B cell (primary cell): ENCODE measurements at regions of chr2 and their contacts with region 1.

Region 1: DNA sequence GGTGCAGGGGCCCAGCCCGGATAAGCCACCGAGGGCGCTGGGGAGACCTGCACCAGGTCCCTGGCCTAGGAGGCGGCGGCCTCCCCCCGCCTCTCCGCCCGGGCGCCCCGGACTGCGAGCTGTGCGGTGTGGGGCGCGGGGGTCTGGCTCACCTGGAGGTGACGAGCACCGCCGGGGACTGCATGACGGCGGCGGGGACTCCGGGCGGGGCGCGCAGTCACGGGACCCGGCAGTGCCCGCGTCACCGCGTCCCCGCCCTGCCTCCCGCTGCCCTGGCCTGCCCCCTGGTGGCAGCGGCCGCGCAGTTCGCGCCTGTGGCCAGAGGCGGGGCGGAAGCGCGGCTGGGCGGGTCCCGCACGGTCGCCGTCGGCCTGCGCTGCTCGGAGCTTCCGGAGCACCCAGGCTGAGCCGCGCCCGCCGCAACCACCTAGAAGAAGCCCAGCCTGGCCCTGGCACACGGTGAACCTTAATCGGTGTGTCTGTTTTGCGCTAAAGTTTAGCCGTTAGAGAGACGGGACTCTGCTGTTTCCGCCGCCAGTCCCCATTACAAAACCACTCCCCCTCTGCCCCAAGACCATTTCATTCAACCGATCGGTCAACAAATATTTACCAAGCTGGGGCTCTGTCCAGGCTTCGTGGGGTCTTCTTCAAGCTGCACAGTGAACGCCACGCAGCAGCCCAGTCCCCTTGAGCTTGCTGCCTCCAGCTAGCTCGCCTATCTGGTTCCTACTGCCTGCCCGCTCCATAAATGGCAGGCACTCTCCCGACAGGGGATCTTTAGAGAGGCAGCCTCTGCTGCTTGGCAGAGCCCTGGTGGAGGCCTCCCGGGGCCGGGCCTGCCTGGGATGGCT is at the start of gene HS1BP3:
- DNase-seq: peak; percentile 96
- ATAC-seq: peak; percentile 96
- H3K4me3 ChIP-seq: peak within 1 kb of the TSS; percentile 73 to 90 (median 81)
- H3K4me3 Mint-ChIP-seq: peak within 1 kb of the TSS; percentile 88
- H3K27ac ChIP-seq: peak within 1 kb of the TSS; percentile 93 to 94
- H3K27ac Mint-ChIP-seq: peak within 1 kb of the TSS; percentile 97
- H3K4me1 ChIP-seq: peaks cover 41 to 49% of the 10 kb centered on the region in 2 donors
- H3K4me1 Mint-ChIP-seq: peaks cover 50% of the 10 kb centered on the region
- H3K27me3 ChIP-seq: peaks cover 0 to 4% (median 0%) of the 10 kb centered on the region in 4 experiments
- H3K27me3 Mint-ChIP-seq: peaks cover 3% of the 10 kb centered on the region
- CTCF ChIP-seq: peak; percentile 90
- total RNA-seq, gene HS1BP3: 27.5 and 27.8 TPM in 2 replicates

Region 2: DNA sequence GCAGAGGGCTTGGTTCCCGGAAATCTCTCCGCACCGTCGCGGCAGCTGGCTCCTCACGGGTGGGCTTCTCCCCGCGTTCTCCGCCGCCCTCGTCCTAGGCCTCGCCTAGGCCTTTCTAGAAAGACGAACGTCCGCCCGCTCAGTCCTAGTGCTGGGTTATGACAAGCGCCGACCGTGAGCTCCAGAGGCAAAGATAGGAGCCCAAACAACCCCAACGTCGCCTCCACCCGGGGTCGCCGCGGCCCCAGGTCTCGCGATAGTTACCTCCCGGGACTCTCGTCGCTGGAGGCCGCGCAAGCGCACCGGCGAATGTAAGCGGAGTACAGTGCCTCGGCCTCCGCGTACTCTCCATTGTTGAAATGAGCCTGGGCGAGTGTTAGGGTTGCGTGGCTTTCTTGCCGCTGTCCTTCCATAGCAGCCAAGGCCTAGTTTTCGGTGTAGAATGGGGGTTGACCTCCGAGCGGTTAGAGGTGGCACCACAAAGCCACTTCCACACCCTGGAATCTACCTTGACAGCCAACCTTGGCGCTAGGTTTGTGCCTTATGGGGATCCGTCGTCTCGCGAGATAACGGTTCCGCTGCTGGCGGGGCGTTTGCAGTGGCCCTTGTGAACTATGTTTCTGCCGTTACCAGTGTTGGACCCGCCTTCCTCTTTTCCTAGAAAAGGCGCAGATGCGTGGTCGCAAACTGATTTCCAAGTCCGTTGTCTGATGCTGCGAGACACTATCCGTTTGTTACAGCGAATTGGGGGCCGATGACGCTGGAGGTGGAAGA is 749.5 kb before region 1 on chr2 and contains the start of gene TTC32:
- CTCF ChIA-PET with region 1: no interaction called
- POLR2A ChIA-PET with region 1: no interaction called
- intact Hi-C with region 1: loop called (anchors 2 kb)
- DNase-seq: peak; percentile 98
- ATAC-seq: peak; percentile 89
- H3K4me3 ChIP-seq: peak within 1 kb of the TSS; percentile 79 to 99 (median 93)
- H3K4me3 Mint-ChIP-seq: peak within 1 kb of the TSS; percentile 99
- H3K27ac ChIP-seq: peak within 1 kb of the TSS; percentile 92 to 94
- H3K27ac Mint-ChIP-seq: peak within 1 kb of the TSS; percentile 99
- H3K4me1 ChIP-seq: peaks cover 19 to 33% of the 10 kb centered on the region in 2 donors
- H3K4me1 Mint-ChIP-seq: peaks cover 44% of the 10 kb centered on the region
- H3K27me3 ChIP-seq: no peaks in the 10 kb centered on the region
- H3K27me3 Mint-ChIP-seq: peaks cover 3% of the 10 kb centered on the region
- CTCF ChIP-seq: no peak
- total RNA-seq, gene TTC32: 38.1 TPM in 2 replicates

Region 3: DNA sequence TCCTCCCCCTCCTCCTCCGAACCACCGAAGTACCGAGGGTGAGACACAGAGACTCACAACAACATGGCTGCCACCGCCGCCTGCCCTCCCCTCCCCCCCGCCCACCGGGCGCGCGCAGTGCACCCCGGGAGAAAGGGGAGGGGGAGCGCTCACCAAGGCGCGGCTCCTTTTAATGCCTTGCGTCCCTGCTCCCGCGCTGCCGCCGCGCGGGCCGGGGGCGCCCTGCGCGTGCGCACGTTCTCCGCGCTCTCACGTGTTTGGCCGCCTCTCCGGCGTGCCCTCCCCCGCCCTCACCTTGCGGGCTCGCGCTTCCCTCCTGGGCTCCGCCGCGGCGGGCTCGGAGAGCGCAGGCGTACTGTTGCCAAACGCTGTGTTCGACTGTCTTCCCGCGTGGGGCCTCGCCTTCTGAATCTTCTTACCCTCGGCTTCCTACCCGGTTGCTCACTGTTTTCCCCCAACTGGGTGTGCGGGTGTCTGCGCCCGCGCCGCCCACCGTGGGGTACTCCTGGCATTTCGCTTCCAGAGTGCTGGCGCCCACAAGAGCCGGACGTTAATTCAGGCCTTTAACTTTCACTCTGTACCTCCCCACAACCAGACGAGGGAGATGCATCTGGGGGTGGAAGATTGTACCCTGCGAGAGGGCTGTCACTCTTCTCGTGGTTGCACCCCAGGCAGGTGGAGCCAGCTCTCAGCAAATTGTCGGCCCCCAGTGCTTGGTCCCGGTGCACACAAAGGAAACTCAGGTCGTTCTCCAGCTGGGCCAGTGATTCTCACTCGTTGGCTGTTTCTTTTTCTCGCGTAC is 300.2 kb before region 1 on chr2 and contains the start of gene PUM2:
- CTCF ChIA-PET with region 1: interaction called, 3 read pairs
- POLR2A ChIA-PET with region 1: interaction called, 9 read pairs
- intact Hi-C with region 1: loop called (anchors 1 kb)
- DNase-seq: peak; percentile 99
- ATAC-seq: peak; percentile 85
- H3K4me3 ChIP-seq: peak within 1 kb of the TSS; percentile 76 to 95 (median 86)
- H3K4me3 Mint-ChIP-seq: no peak within 1 kb of the TSS
- H3K27ac ChIP-seq: peak within 1 kb of the TSS; percentile 89 to 94
- H3K27ac Mint-ChIP-seq: no peak within 1 kb of the TSS
- H3K4me1 ChIP-seq: peaks cover 32 to 39% of the 10 kb centered on the region in 2 donors
- H3K4me1 Mint-ChIP-seq: peaks cover 34% of the 10 kb centered on the region
- H3K27me3 ChIP-seq: no peaks in the 10 kb centered on the region
- H3K27me3 Mint-ChIP-seq: no peaks in the 10 kb centered on the region
- CTCF ChIP-seq: peak; percentile 17
- total RNA-seq, gene PUM2: 151 and 163 TPM in 2 replicates

Region 4: GRCh38 chr2:20595431-20596192 is 55.5 kb before region 1 on chr2:
- CTCF ChIA-PET with region 1: interaction called, 4 read pairs
- POLR2A ChIA-PET with region 1: no interaction called
- intact Hi-C with region 1: loop called (anchors 5 kb)
- DNase-seq: peak; percentile 75
- ATAC-seq: peak; percentile 84
- H3K4me3 ChIP-seq: peak overlapping the region in 3 of 5 experiments; percentile 13 to 40 (median 39)
- H3K4me3 Mint-ChIP-seq: peak overlapping the region; percentile 83
- H3K27ac ChIP-seq: peak overlapping the region in 1 of 2 donors; percentile 50
- H3K27ac Mint-ChIP-seq: peak overlapping the region; percentile 74
- H3K4me1 ChIP-seq: peaks cover 37 to 45% of the 10 kb centered on the region in 2 donors
- H3K4me1 Mint-ChIP-seq: peaks cover 50% of the 10 kb centered on the region
- H3K27me3 ChIP-seq: peaks cover 0 to 14% (median 6%) of the 10 kb centered on the region in 4 experiments
- H3K27me3 Mint-ChIP-seq: peaks cover 24% of the 10 kb centered on the region
- CTCF ChIP-seq: no peak

Region 5: GRCh38 chr2:20666304-20667150 is 15.4 kb after region 1 on chr2 and contains the start of gene GDF7:
- CTCF ChIA-PET with region 1: interaction called, 139 read pairs
- POLR2A ChIA-PET with region 1: interaction called, 11 read pairs
- intact Hi-C with region 1: loop called (anchors 1 kb)
- DNase-seq: peak; percentile 87
- ATAC-seq: peak; percentile 82
- H3K4me3 ChIP-seq: peak within 1 kb of the TSS in 4 of 5 experiments; percentile 57 to 80 (median 64)
- H3K4me3 Mint-ChIP-seq: peak within 1 kb of the TSS; percentile 95
- H3K27ac ChIP-seq: peak within 1 kb of the TSS; percentile 47 to 61
- H3K27ac Mint-ChIP-seq: peak within 1 kb of the TSS; percentile 94
- H3K4me1 ChIP-seq: peaks cover 35 to 64% of the 10 kb centered on the region in 2 donors
- H3K4me1 Mint-ChIP-seq: peaks cover 35% of the 10 kb centered on the region
- H3K27me3 ChIP-seq: peaks cover 0 to 85% (median 25%) of the 10 kb centered on the region in 4 experiments
- H3K27me3 Mint-ChIP-seq: peaks cover 14% of the 10 kb centered on the region
- CTCF ChIP-seq: peak; percentile 48
- total RNA-seq, gene GDF7: 14.8 and 15.3 TPM in 2 replicates

Region 6: GRCh38 chr2:20822535-20823490 is 171.7 kb after region 1 on chr2 and contains the start of gene LDAH:
- CTCF ChIA-PET with region 1: interaction called, 9 read pairs
- POLR2A ChIA-PET with region 1: no interaction called
- intact Hi-C with region 1: loop called (anchors 1 kb)
- DNase-seq: peak; percentile 92
- ATAC-seq: peak; percentile 79
- H3K4me3 ChIP-seq: peak within 1 kb of the TSS; percentile 64 to 99 (median 88)
- H3K4me3 Mint-ChIP-seq: peak within 1 kb of the TSS; percentile 98
- H3K27ac ChIP-seq: peak within 1 kb of the TSS; percentile 89 to 96
- H3K27ac Mint-ChIP-seq: peak within 1 kb of the TSS; percentile 99
- H3K4me1 ChIP-seq: peaks cover 0 to 7% of the 10 kb centered on the region in 2 donors
- H3K4me1 Mint-ChIP-seq: peaks cover 26% of the 10 kb centered on the region
- H3K27me3 ChIP-seq: peaks cover 0 to 2% (median 0%) of the 10 kb centered on the region in 4 experiments
- H3K27me3 Mint-ChIP-seq: peaks cover 1% of the 10 kb centered on the region
- CTCF ChIP-seq: no peak
- total RNA-seq, gene LDAH: 27.1 and 31.3 TPM in 2 replicates

Region 7: DNA sequence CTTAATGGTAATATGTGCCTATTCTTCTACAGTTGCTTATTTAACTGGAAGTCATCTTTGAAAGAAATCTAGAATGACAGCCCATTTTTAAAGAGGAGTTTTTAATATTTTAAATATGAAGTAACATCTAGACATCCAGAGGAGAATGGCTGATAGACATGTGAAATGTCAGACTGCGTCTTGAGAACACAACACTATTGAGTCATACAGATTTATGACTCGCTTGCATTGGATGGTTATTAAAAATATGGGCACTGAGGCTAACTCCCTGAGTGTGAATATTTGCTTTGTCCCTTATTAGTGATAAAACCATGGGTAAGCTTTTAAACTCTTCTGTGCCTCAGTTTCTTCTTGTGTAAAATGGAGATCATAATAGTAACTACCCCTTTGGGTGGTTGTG is 495.5 kb after region 1 on chr2:
- CTCF ChIA-PET with region 1: no interaction called
- POLR2A ChIA-PET with region 1: no interaction called
- intact Hi-C with region 1: no loop called
- DNase-seq: no peak
- ATAC-seq: no peak
- H3K4me3 ChIP-seq: no peak overlapping the region
- H3K4me3 Mint-ChIP-seq: no peak overlapping the region
- H3K27ac ChIP-seq: no peak overlapping the region
- H3K27ac Mint-ChIP-seq: no peak overlapping the region
- H3K4me1 ChIP-seq: no peaks in the 10 kb centered on the region
- H3K4me1 Mint-ChIP-seq: no peaks in the 10 kb centered on the region
- H3K27me3 ChIP-seq: no peaks in the 10 kb centered on the region
- H3K27me3 Mint-ChIP-seq: peaks cover 7% of the 10 kb centered on the region
- CTCF ChIP-seq: no peak

Region 8: GRCh38 chr2:21220930-21221329 is 569.8 kb after region 1 on chr2:
- CTCF ChIA-PET with region 1: no interaction called
- POLR2A ChIA-PET with region 1: no interaction called
- intact Hi-C with region 1: no loop called
- DNase-seq: no peak
- ATAC-seq: no peak
- H3K4me3 ChIP-seq: no peak overlapping the region
- H3K4me3 Mint-ChIP-seq: no peak overlapping the region
- H3K27ac ChIP-seq: no peak overlapping the region
- H3K27ac Mint-ChIP-seq: no peak overlapping the region
- H3K4me1 ChIP-seq: no peaks in the 10 kb centered on the region
- H3K4me1 Mint-ChIP-seq: no peaks in the 10 kb centered on the region
- H3K27me3 ChIP-seq: no peaks in the 10 kb centered on the region
- H3K27me3 Mint-ChIP-seq: peaks cover 5% of the 10 kb centered on the region
- CTCF ChIP-seq: no peak